WTC11 (cell line): ENCODE measurements at regions of chr15 and their contacts with region 1.

Region 1: DNA sequence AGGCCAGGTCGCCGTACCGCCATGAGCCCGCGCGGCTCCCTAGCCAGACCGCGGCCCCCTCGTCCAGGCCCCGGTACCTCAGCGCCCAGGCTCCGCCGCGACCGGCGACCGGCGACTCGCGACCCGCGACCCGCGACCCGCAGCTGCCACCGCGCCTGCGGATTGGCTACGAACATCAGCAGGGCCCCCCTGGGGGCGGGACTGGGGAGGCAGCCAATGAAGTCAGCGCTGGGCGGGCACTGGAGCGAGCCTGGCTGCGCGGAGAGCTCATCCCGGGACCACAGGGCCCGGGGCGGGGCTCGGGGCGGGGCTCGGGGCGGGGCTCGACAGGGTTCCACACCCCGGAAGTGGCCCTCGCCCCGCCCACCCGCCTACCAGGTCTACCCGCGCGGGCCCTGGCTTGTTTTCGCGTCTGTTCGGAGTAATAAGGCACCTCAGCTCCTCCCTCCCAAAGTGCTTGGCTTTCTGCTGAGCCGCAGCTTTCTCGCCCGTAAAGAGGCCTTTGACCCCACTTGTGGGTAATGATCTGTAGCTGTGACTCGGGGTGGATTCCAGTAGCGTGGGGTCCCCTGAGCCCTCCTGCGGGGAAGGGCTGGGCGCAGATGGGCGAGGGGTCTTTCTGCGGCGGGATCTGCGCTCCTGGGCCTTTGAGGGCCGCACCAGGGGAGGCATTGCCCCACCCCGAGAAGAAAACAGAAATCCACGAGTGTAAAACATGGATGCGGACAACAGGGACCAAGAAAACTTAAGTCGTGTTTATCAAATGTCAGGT is at the start of gene LYSMD4:
- DNase-seq: peak; percentile 98
- ATAC-seq: peak; percentile 96
- H3K4me3 Mint-ChIP-seq: peak within 1 kb of the TSS; percentile 84
- H3K27ac Mint-ChIP-seq: peak within 1 kb of the TSS; percentile 97
- H3K4me1 Mint-ChIP-seq: peaks cover 31% of the 10 kb centered on the region
- H3K27me3 Mint-ChIP-seq: peaks cover 7% of the 10 kb centered on the region
- CTCF ChIP-seq: no peak
- total RNA-seq, gene LYSMD4: 14.1 to 15.3 TPM (median 14.9 TPM) in 3 replicates

Region 2: GRCh38 chr15:99275525-99276128 is 457.8 kb before region 1 on chr15:
- CTCF ChIA-PET with region 1: interaction called, 15 read pairs
- POLR2A ChIA-PET with region 1: no interaction called
- DNase-seq: peak; percentile 22
- ATAC-seq: 0 out of 2 replicates have a peak, but pooled peaks have one; percentile 16
- H3K4me3 Mint-ChIP-seq: no peak overlapping the region
- H3K27ac Mint-ChIP-seq: no peak overlapping the region
- H3K4me1 Mint-ChIP-seq: peaks cover 8% of the 10 kb centered on the region
- H3K27me3 Mint-ChIP-seq: no peaks in the 10 kb centered on the region
- CTCF ChIP-seq: no peak

Region 3: DNA sequence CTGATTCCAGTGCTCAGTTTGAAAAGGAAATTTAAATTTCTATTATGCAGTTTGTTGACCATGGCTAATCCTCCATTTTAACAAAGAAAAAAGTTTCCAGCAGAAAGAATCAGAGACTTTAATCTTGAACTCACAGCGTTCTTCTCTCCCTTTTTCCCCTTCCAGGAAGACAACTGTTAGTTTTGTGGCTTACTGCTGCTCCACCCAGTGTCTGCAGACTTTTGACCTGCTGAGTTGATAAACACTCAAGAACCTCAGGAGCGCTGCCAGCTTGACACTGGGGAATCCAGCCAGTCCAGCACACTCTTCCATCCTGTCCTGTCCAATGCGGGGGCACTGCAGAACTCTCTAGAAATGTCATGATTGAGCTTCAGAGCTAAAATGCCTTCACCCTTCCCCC is 347.6 kb before region 1 on chr15:
- CTCF ChIA-PET with region 1: interaction called, 15 read pairs
- POLR2A ChIA-PET with region 1: no interaction called
- DNase-seq: no peak
- ATAC-seq: no peak
- H3K4me3 Mint-ChIP-seq: no peak overlapping the region
- H3K27ac Mint-ChIP-seq: peak overlapping the region; percentile 29; the same call in 1 of the 2 replicates
- H3K4me1 Mint-ChIP-seq: peaks cover 27% of the 10 kb centered on the region
- H3K27me3 Mint-ChIP-seq: peaks cover 3% of the 10 kb centered on the region; the same call in 1 of the 2 replicates
- CTCF ChIP-seq: no peak

Region 4: DNA sequence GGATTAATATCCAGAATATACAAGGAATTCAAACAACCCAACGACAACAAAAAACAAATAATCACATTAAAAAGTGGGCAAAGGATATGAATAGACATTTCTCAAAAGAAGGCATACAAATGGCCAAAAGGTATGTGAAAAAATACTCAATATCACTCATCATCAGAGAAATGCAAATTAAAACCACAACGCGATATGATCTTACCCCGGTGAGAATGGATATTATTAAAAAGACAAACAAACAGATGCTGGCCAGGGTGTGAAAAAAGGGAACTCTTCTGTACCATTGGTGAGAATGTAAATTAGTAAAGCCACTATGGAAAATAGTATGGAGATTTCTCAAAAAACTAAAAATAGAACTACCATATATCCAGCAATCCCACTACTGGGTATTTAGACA is 211.2 kb before region 1 on chr15:
- CTCF ChIA-PET with region 1: no interaction called
- POLR2A ChIA-PET with region 1: no interaction called
- DNase-seq: no peak
- ATAC-seq: no peak
- H3K4me3 Mint-ChIP-seq: no peak overlapping the region
- H3K27ac Mint-ChIP-seq: no peak overlapping the region
- H3K4me1 Mint-ChIP-seq: no peaks in the 10 kb centered on the region
- H3K27me3 Mint-ChIP-seq: no peaks in the 10 kb centered on the region
- CTCF ChIP-seq: no peak

Region 5: DNA sequence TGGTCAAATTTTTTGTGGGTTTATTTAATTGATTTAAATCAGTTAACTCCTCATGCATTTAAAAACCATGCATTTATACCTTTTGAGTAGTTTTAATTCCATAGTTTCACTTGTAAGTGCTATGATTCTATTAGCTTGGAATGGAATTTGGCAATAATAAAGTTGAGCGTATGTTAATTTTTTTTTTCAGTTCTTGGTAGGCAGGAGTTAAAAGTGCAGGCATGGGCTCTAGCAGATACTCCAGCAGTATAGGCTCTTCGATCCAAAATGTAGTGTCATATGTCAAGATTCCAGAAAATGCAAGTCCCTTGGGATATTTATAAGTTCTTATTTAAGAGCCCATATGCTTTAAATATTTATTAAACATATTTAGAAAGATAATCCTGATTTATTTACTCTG is 70.6 kb before region 1 on chr15:
- CTCF ChIA-PET with region 1: no interaction called
- POLR2A ChIA-PET with region 1: no interaction called
- DNase-seq: no peak
- ATAC-seq: no peak
- H3K4me3 Mint-ChIP-seq: no peak overlapping the region
- H3K27ac Mint-ChIP-seq: no peak overlapping the region
- H3K4me1 Mint-ChIP-seq: peaks cover 5% of the 10 kb centered on the region; the same call in 1 of the 2 replicates
- H3K27me3 Mint-ChIP-seq: no peaks in the 10 kb centered on the region
- CTCF ChIP-seq: no peak

Region 6: GRCh38 chr15:99755692-99756409 is 22.4 kb after region 1 on chr15:
- CTCF ChIA-PET with region 1: interaction called, 19 read pairs
- POLR2A ChIA-PET with region 1: interaction called, 3 read pairs
- DNase-seq: peak; percentile 28
- ATAC-seq: peak; percentile 92
- H3K4me3 Mint-ChIP-seq: no peak overlapping the region
- H3K27ac Mint-ChIP-seq: no peak overlapping the region
- H3K4me1 Mint-ChIP-seq: peaks cover under 1% of the 10 kb centered on the region
- H3K27me3 Mint-ChIP-seq: peaks cover 22% of the 10 kb centered on the region
- CTCF ChIP-seq: peak; percentile 32

Region 7: DNA sequence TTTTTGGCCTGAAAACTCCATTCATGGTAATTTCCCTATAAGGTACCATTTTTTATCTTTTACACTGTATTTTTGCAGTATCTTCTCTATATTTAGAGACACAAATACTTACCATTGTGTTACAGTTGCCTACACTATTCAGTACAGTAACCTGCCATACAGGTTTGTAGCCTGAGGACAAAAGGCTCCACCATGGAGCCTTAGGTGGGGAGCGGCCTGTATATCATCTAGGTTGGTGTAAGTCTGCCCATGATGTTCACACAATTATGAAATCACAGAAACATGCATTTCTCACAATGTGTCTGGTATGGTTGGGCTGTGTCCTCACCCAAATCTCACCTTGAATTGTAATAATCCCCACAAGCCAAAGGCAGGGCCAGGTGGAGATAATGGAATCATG is 43.7 kb after region 1 on chr15:
- CTCF ChIA-PET with region 1: no interaction called
- POLR2A ChIA-PET with region 1: no interaction called
- DNase-seq: no peak
- ATAC-seq: no peak
- H3K4me3 Mint-ChIP-seq: no peak overlapping the region
- H3K27ac Mint-ChIP-seq: no peak overlapping the region
- H3K4me1 Mint-ChIP-seq: no peaks in the 10 kb centered on the region
- H3K27me3 Mint-ChIP-seq: no peaks in the 10 kb centered on the region
- CTCF ChIP-seq: no peak